ENCODE measurements at regions of chr11 and their contacts with region 1.

Region 1: DNA sequence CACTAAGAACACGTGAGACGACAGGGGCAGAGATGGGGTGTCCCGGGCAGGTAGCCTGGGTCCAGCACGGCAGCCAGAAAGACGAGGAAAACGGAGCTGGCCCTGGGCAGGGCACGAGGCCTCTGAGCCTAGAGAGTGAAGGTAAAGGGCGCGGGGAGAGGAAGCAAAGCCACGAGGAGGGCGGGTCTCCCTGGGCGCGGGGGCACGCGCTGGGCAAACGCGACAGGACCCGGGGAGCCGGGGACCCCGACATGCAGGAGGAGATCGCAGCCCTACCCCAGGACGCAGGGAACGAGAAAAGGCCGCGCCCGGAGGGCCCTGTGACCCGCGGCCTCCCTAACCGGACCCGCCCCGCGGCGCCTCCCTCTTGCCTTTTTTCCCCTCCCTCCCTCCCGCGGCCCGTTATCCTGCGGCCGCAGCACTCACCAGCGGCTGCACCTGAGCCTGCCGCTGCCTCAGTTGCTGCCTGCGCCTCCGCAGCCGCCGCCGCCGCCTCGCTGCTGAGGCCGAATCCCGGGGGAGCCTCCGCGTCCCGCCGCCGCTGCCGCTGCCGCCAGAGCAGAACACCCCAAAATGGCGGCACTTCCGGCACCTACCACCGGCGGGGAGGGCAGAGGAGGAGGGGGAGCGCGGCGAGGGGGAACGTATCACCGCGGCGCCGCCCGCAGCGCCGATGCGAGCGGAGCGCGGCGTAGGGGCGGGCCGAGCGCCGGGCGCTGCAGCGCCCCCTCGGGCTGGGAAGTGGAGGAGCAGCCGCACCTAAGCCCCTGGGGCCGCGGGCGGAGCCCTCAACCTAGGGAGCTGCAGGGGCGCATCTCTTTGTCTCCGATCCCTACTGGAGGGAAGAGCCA is at the start of gene CELF1:
- DNase-seq: peak; percentile 53
- H3K4me3 ChIP-seq: peak within 1 kb of the TSS; percentile 99
- H3K27ac ChIP-seq: peak within 1 kb of the TSS; percentile 82
- H3K27me3 ChIP-seq: no peaks in the 10 kb centered on the region
- CTCF ChIP-seq: peak; percentile 66
- polyA plus RNA-seq, gene CELF1: 87.2 and 87.5 TPM in 2 replicates

Region 2: DNA sequence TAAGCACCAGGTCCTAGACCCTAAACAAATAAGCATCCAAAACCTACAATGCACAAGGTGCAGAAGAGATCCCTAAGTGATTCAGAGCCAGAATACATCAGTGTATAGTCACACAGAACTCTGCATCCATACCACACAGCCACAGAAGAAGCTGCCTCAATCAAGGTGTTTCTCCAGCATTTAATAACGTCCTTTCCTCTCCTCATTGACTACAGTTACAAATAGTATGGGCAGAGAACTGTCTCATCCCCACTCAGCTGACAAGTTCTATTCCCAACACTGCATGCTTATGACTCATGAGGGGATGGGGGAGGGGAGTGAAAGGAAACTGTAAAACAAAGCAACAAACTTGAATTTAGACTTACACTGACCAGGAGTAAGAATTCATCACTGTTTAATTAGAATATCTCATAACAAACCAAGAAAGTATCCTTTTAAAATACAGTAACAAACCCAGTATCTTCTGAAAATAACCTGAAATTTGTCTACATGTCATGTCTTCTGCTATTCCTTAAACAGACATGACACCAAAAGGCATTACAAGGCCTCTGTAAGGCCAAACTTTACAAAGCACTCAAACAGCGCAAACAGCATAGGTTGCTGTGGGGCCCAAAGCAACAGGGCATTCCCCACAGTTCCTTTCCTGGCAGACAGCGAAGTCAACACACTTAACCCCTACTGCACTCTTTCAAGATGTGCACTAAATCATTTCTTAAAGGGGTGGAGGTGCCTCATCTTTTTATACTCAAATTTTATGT is 29.1 kb before region 1 on chr11:
- CTCF ChIA-PET with region 1: interaction called, 10 read pairs
- POLR2A ChIA-PET with region 1: interaction called, 3 read pairs
- DNase-seq: peak; percentile 26
- H3K4me3 ChIP-seq: peak overlapping the region; percentile 21
- H3K27ac ChIP-seq: peak overlapping the region; percentile 77
- H3K27me3 ChIP-seq: no peaks in the 10 kb centered on the region
- CTCF ChIP-seq: no peak

Region 3: DNA sequence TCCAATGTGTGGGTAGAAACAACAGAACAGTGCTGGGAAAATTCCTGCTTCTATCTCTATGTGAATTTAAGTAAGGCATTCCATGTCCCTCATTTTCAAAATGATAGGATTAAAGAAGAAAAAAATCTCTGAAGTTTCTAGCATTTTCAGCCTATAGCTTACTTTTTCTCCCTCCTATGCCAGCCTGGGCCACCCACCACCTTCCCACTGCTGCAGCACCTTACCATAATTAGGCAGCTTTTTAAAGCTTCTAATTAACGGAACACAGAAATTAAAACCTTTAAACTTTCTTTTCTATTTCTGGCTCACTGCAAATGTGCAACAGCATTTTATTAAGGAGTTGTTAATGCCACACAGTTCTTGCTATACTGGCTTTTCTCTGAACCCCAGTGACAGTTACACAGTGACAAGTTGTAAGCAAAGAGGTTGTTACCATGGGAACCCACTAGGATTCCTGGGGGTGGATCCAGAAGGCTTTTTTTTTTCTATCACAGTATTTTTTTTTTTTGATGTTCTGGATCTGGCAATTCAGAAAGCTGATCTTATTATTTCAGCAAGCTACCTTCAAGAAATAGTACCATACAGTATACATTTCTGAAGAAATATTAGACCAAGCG is 20.1 kb before region 1 on chr11:
- CTCF ChIA-PET with region 1: interaction called, 33 read pairs
- POLR2A ChIA-PET with region 1: interaction called, 19 read pairs
- DNase-seq: no peak
- H3K4me3 ChIP-seq: no peak overlapping the region
- H3K27ac ChIP-seq: no peak overlapping the region
- H3K27me3 ChIP-seq: no peaks in the 10 kb centered on the region
- CTCF ChIP-seq: no peak

Region 4: GRCh38 chr11:47538741-47539574 is 13.8 kb before region 1 on chr11:
- CTCF ChIA-PET with region 1: interaction called, 33 read pairs
- POLR2A ChIA-PET with region 1: interaction called, 19 read pairs
- DNase-seq: no peak
- H3K4me3 ChIP-seq: no peak overlapping the region
- H3K27ac ChIP-seq: no peak overlapping the region
- H3K27me3 ChIP-seq: no peaks in the 10 kb centered on the region
- CTCF ChIP-seq: no peak

Region 5: GRCh38 chr11:47565340-47566148 is 12.8 kb after region 1 on chr11 and contains the start of gene PTPMT1:
- CTCF ChIA-PET with region 1: interaction called, 11 read pairs
- POLR2A ChIA-PET with region 1: interaction called, 3 read pairs
- DNase-seq: no peak
- H3K4me3 ChIP-seq: peak within 1 kb of the TSS; percentile 82
- H3K27ac ChIP-seq: peak within 1 kb of the TSS; percentile 57
- H3K27me3 ChIP-seq: no peaks in the 10 kb centered on the region
- CTCF ChIP-seq: no peak
- polyA plus RNA-seq, gene PTPMT1: 39.2 and 39.5 TPM in 2 replicates

Region 6: GRCh38 chr11:47616726-47617416 is 64.1 kb after region 1 on chr11:
- CTCF ChIA-PET with region 1: interaction called, 10 read pairs
- POLR2A ChIA-PET with region 1: no interaction called
- DNase-seq: peak; percentile 69
- H3K4me3 ChIP-seq: no peak overlapping the region
- H3K27ac ChIP-seq: no peak overlapping the region
- H3K27me3 ChIP-seq: no peaks in the 10 kb centered on the region
- CTCF ChIP-seq: peak; percentile 99

Region 7: DNA sequence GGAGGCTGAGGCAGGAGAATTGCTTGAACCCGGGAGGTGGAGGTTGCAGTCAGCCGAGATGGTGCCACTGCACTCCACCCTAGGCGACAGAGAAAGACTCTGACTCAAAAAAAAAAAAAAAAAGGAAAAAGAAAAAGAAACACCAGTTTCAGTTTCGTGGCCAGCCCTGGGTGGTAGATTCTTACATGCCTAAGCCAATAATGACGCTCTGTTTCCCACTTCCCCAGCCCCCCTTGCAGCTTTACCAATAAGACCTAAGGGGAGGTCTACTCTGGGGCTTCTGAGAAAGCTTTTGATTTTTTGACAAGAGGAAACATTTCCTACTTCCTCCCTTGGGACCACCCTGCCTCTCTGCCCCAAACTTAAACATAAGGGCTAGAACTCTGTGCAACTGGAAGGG is 397.6 kb after region 1 on chr11:
- CTCF ChIA-PET with region 1: no interaction called
- POLR2A ChIA-PET with region 1: no interaction called
- DNase-seq: no peak
- H3K4me3 ChIP-seq: no peak overlapping the region
- H3K27ac ChIP-seq: no peak overlapping the region
- H3K27me3 ChIP-seq: no peaks in the 10 kb centered on the region
- CTCF ChIP-seq: no peak